IMR-90 (cell line): ENCODE measurements at regions of chr9 and their contacts with region 1.

Region 1: GRCh38 chr9:21995177-21996086 is 841 bp downstream of the CDKN2B-AS1 start:
- DNase-seq: peak; percentile 69
- ATAC-seq: peak; percentile 71
- H3K4me3 ChIP-seq: peak overlapping the region; percentile 77
- H3K27ac ChIP-seq: peak overlapping the region; percentile 90
- H3K4me1 ChIP-seq: peaks cover 7% of the 10 kb centered on the region
- H3K27me3 ChIP-seq: no peaks in the 10 kb centered on the region
- CTCF ChIP-seq: 0 out of 2 replicates have a peak, but pooled peaks have one; percentile 19
- POLR2A ChIP-seq: no peak; the same call in none of the 2 replicates
- RAD21 ChIP-seq: no peak

Region 2: DNA sequence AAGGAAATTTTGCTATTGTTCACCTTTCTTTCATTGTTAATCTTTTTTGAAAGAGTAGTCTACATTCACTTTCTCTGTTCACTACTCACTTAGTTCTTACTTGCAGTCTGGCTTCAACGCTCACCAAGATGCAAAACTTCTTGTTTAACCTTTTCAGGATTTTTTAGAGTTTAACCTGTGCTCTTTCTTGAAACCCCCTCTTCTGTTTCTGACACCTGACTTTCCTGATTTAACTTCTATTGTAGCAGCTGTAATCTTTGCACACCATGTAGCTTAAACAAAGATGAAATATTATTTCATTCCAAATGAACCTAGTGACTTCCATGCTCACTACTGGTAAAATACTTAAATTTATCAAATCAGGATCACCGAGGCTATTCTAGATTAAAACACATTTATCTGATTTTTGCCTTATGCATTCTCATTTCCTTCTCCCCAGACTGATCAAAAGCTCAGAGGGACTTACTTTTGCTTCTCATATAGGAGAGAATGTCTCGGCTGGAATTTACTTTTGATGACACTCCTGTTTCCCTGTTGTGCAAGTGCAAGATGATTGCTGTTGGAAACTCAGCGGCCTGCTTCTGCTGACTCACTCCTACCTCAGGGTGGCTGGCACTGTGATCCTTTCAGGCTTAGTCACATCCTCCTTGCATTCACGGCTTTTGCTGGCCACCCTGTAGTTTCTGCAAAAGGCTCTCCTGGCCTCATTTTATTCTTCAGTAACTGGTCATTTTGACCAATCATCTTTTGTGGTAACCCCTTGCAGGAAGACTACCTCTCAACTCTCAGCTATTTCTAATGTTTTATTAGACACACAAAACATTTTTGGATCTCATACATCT is 404.0 kb before region 1 on chr9:
- CTCF ChIA-PET with region 1: no interaction called
- POLR2A ChIA-PET with region 1: no interaction called
- dilution Hi-C with region 1: no loop called
- in situ Hi-C with region 1: loop called (anchors 25 kb)
- intact Hi-C with region 1: no loop called
- DNase-seq: peak; percentile 99
- ATAC-seq: peak; percentile 97
- H3K4me3 ChIP-seq: no peak overlapping the region
- H3K27ac ChIP-seq: peak overlapping the region; percentile 77
- H3K4me1 ChIP-seq: peaks cover 2% of the 10 kb centered on the region; the same call in 1 of the 2 replicates
- H3K27me3 ChIP-seq: no peaks in the 10 kb centered on the region
- CTCF ChIP-seq: no peak
- POLR2A ChIP-seq: peak; percentile 77; the same call in 1 of the 2 replicates
- RAD21 ChIP-seq: no peak; the same call in 1 of the 2 replicates

Region 3: DNA sequence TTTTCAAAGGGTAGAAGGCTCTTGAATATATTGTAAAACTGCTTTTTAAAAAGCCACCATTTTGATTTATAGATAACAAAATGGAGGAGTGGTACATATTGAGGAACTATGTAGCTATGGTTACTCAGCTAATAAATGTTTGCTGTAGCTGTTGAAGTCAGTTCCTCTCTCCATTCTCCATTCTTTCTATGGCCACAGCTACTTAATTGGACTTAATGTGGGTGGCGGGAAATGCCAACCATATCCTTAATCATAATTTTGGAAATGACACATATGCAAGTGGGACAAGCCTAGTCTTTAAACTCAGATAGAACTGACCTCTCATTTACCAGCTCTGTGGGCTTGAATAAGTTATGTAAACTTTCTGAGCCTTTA is 11.9 kb before region 1 on chr9:
- CTCF ChIA-PET with region 1: no interaction called
- POLR2A ChIA-PET with region 1: no interaction called
- dilution Hi-C with region 1: no loop called
- in situ Hi-C with region 1: no loop called
- intact Hi-C with region 1: no loop called
- DNase-seq: no peak
- ATAC-seq: no peak
- H3K4me3 ChIP-seq: no peak overlapping the region
- H3K27ac ChIP-seq: no peak overlapping the region
- H3K4me1 ChIP-seq: peaks cover 2% of the 10 kb centered on the region; the same call in 1 of the 2 replicates
- H3K27me3 ChIP-seq: peaks cover 6% of the 10 kb centered on the region
- CTCF ChIP-seq: no peak
- POLR2A ChIP-seq: no peak
- RAD21 ChIP-seq: no peak

Region 4: DNA sequence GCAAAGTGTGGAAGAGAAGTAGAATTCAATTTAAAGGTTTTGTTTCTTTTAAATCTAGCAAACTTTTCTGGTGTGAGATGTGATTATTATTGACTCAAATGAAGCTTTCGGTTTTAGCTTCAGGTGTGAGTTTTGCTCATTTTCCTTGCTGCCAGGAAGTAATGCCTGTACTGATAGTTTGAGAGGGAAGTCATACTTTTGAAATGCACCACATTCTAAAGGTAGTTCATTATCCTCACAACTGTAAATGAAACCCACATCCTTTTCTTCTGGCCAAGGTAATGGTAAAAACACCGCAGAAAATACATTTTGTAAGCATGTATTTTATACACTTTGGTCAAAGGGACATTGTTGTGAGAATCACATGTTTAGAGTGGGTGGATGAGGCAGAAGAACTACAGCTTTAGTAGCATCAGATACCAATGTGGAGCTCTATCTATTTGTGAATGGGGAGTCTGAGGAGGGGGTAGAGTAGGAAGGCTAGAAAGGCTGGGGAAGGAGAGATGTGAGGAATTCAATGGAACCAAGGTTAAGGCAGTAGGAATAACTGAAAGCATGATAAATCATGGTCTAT is 180.6 kb after region 1 on chr9:
- CTCF ChIA-PET with region 1: no interaction called
- POLR2A ChIA-PET with region 1: no interaction called
- dilution Hi-C with region 1: no loop called
- in situ Hi-C with region 1: no loop called
- intact Hi-C with region 1: no loop called
- DNase-seq: no peak
- ATAC-seq: peak; percentile 35
- H3K4me3 ChIP-seq: no peak overlapping the region
- H3K27ac ChIP-seq: no peak overlapping the region
- H3K4me1 ChIP-seq: no peaks in the 10 kb centered on the region; the same call in 1 of the 2 replicates
- H3K27me3 ChIP-seq: no peaks in the 10 kb centered on the region
- CTCF ChIP-seq: no peak
- POLR2A ChIP-seq: no peak
- RAD21 ChIP-seq: no peak

Region 5: GRCh38 chr9:22244141-22245011 is 248.9 kb after region 1 on chr9:
- CTCF ChIA-PET with region 1: interaction called, 10 read pairs
- POLR2A ChIA-PET with region 1: no interaction called
- dilution Hi-C with region 1: no loop called
- in situ Hi-C with region 1: loop called (anchors 10 kb)
- intact Hi-C with region 1: loop called (anchors 2 kb)
- DNase-seq: peak; percentile 63
- ATAC-seq: peak; percentile 92
- H3K4me3 ChIP-seq: no peak overlapping the region
- H3K27ac ChIP-seq: no peak overlapping the region
- H3K4me1 ChIP-seq: no peaks in the 10 kb centered on the region
- H3K27me3 ChIP-seq: peaks cover 3% of the 10 kb centered on the region
- CTCF ChIP-seq: peak; percentile 67
- POLR2A ChIP-seq: no peak
- RAD21 ChIP-seq: peak; percentile 67